ENCODE measurements at regions of chr10 and their contacts with region 1.

Region 1: DNA sequence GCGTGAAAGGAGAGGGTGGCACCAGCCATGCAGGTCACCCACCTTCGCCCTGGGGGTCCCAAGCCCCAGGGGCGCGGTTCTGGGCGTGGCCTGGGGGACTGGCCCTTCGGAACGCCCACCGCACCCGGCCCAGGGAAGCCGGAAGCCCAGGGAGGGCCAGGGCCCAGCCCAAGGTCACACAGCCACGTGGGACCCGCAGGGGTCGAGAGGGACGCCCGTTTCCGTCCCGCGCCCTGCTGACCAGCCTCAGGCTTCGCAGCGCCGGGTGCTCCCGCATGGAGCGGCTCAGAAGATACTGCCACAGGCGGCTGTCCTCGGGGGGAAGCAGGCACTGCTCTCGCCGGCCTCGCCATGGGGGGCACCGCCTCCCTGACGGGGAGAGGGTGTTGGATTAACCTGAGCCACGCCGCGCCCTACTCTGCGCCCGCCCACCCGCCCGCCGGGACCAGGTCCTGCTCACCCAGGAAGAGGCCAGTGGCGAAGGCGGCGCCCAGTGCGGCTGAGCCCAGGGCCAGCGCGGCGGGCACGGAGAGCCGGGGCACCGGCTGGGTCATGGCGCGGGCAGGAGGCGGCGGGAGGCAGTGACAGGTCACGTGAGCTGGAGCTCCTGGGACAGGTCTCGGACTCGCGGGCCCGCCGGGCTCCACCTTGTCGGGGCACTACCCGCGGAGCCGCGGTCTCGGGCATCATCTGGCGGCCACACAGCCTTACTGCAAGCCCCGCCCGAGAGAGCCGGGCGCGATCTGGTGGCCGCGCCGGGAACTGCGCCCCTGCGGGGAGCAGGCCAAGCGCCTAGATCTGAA is at the start of gene COMTD1:
- DNase-seq: peak; percentile 91 to 95 (median 93)
- H3K4me3 ChIP-seq: peak within 1 kb of the TSS; percentile 83
- H3K27ac ChIP-seq: peak within 1 kb of the TSS; percentile 59 to 75
- H3K4me1 ChIP-seq: peaks cover 1% of the 10 kb centered on the region
- H3K27me3 ChIP-seq: no peaks in the 10 kb centered on the region
- CTCF ChIP-seq: peak; percentile 100
- EP300 ChIP-seq: no peak
- POLR2A ChIP-seq: peak; percentile 35
- total RNA-seq, gene COMTD1: 14.2 to 37.3 (median 18.4) TPM

Region 2: GRCh38 chr10:74244097-74244685 is 991.4 kb before region 1 on chr10:
- intact Hi-C with region 1: loop called (anchors 5 to 10 kb)
- DNase-seq: peak in 2 of 5 donors; percentile 23 to 47
- H3K4me3 ChIP-seq: no peak overlapping the region
- H3K27ac ChIP-seq: no peak overlapping the region
- H3K4me1 ChIP-seq: no peaks in the 10 kb centered on the region
- H3K27me3 ChIP-seq: no peaks in the 10 kb centered on the region
- CTCF ChIP-seq: peak in 2 of 3 donors; percentile 60 to 67
- EP300 ChIP-seq: no peak
- POLR2A ChIP-seq: no peak

Region 3: DNA sequence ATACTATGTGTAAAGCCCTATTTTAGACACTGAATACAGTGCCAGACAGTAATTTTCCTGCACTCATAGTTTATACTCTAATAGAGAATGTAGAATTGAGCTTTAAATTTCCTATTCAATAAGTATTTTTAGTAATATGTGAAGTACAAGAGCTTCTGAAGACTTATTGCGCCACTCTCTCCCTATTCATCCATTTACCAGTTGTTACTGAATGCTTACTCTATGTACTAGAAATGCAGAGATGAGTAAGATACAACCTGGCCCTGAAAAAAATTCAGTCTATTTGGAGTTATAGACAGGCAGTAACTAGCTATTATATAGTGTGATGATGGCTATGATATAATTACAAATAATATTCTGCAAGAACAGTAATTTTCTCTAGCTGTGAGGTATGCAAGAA is 985.7 kb before region 1 on chr10:
- intact Hi-C with region 1: loop called in 3 of 4 experiments (anchors 5 to 10 kb)
- DNase-seq: no peak
- H3K4me3 ChIP-seq: no peak overlapping the region
- H3K27ac ChIP-seq: no peak overlapping the region
- H3K4me1 ChIP-seq: no peaks in the 10 kb centered on the region
- H3K27me3 ChIP-seq: no peaks in the 10 kb centered on the region
- CTCF ChIP-seq: no peak
- EP300 ChIP-seq: no peak
- POLR2A ChIP-seq: no peak

Region 4: DNA sequence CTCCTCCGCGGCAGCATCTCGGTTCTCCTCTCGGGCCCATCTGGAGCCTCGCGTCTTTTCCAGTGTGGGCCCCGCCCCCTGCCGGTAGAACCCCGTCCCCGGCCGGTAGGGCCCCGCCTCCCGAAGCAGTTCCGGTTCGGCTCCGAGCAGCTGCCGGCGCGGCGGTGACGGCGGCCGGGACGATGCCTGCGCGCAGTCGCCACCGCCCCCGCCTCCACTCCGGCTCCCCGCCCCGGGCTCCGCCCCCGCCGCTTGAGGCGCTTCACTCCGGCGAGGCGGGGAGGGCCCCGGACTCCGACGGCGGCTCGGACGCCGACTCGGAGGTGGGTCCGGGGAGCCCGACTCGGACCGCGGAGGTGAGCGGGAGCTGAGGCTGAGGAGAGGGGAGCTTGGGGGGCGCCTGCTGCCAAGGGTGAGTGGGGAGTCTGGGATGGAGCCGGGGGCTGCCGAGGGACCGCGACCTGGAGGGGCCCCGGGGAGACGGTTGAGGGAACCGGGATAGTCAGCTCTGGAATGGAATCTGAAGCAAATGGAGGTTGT is 124.1 kb before region 1 on chr10 and contains the start of gene SAMD8:
- intact Hi-C with region 1: loop called (anchors 5 kb)
- DNase-seq: peak; percentile 96 to 98 (median 97)
- H3K4me3 ChIP-seq: peak within 1 kb of the TSS; percentile 95
- H3K27ac ChIP-seq: peak within 1 kb of the TSS; percentile 83 to 96
- H3K4me1 ChIP-seq: peaks cover 10% of the 10 kb centered on the region
- H3K27me3 ChIP-seq: no peaks in the 10 kb centered on the region
- CTCF ChIP-seq: peak in 2 of 3 donors; percentile 66 to 76
- EP300 ChIP-seq: no peak
- POLR2A ChIP-seq: peak; percentile 89
- total RNA-seq, gene SAMD8: 28.6 to 49.5 (median 32.9) TPM

Region 5: GRCh38 chr10:75187961-75188426 is 47.6 kb before region 1 on chr10:
- intact Hi-C with region 1: loop called in 2 of 4 experiments (anchors 5 to 10 kb)
- DNase-seq: peak in 1 of 5 donors; percentile 46
- H3K4me3 ChIP-seq: no peak overlapping the region
- H3K27ac ChIP-seq: no peak overlapping the region
- H3K4me1 ChIP-seq: peaks cover 4% of the 10 kb centered on the region
- H3K27me3 ChIP-seq: no peaks in the 10 kb centered on the region
- CTCF ChIP-seq: peak; percentile 18 to 55 (median 40)
- EP300 ChIP-seq: no peak
- POLR2A ChIP-seq: no peak

Measured in ovary (tissue), 10 donors.